Body of pancreas (tissue), 4 donors: ENCODE measurements at regions of chr17 and their contacts with region 1.

Region 1: GRCh38 chr17:59918975-59919530 is 26.1 kb downstream of the RPS6KB1 start:
- DNase-seq: no peak
- ATAC-seq: no peak
- H3K4me3 ChIP-seq: no peak overlapping the region
- H3K27ac ChIP-seq: no peak overlapping the region
- H3K4me1 ChIP-seq: peaks cover under 1% of the 10 kb centered on the region
- H3K27me3 ChIP-seq: no peaks in the 10 kb centered on the region
- CTCF ChIP-seq: no peak
- POLR2A ChIP-seq: no peak

Region 2: DNA sequence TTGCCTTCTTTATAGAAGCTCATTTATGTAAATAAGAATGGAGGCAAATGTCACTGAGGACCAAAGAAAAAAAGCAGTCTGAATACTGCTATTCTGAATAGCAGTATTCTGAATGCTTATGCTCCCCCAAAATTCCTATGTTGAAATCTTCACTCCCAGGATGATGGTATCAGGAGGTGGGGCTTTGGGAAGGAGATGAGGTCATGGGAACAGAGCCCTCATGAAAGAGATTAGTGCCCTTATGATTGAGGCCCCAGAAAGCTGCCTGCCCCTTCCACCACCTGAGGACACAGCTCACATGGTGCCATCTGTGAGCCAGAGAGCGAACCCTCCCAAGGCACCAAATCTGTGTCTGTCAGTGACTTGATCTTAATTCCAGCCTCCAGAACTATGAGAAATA is 130.9 kb after region 1 on chr17:
- intact Hi-C with region 1: loop called (anchors 10 kb)
- DNase-seq: no peak
- ATAC-seq: no peak
- H3K4me3 ChIP-seq: no peak overlapping the region
- H3K27ac ChIP-seq: no peak overlapping the region
- H3K4me1 ChIP-seq: no peaks in the 10 kb centered on the region
- H3K27me3 ChIP-seq: no peaks in the 10 kb centered on the region
- CTCF ChIP-seq: no peak
- POLR2A ChIP-seq: no peak